ENCODE measurements at regions of chr10 and their contacts with region 1.

Region 1: GRCh38 chr10:120423431-120424197 is 33.4 kb upstream of the PLPP4 start:
- DNase-seq: peak; percentile 27 to 67
- H3K4me3 ChIP-seq: no peak overlapping the region
- H3K4me1 ChIP-seq: no peaks in the 10 kb centered on the region
- H3K27me3 ChIP-seq: peaks cover 3% of the 10 kb centered on the region; the same call in 1 of the 2 replicates

Region 2: GRCh38 chr10:120735773-120736371 is 312.3 kb after region 1 on chr10:
- in situ Hi-C with region 1: loop called (anchors 5 kb)
- DNase-seq: peak in 1 of 2 experiments; percentile 22
- H3K4me3 ChIP-seq: no peak overlapping the region
- H3K4me1 ChIP-seq: no peaks in the 10 kb centered on the region
- H3K27me3 ChIP-seq: no peaks in the 10 kb centered on the region

Measured in HAP-1 (cell line).